Mammary epithelial cell (primary cell): ENCODE measurements at regions of chr7 and their contacts with region 1.

Region 1: GRCh38 chr7:158760936-158761335 is 56.3 kb upstream of the NCAPG2 start:
- DNase-seq: no peak
- H3K4me3 ChIP-seq: no peak overlapping the region
- H3K27ac ChIP-seq: no peak overlapping the region
- H3K4me1 ChIP-seq: no peaks in the 10 kb centered on the region
- H3K27me3 ChIP-seq: no peaks in the 10 kb centered on the region
- CTCF ChIP-seq: peak; percentile 11 to 17

Region 2: GRCh38 chr7:158723266-158723665 is 37.7 kb before region 1 on chr7:
- CTCF ChIA-PET with region 1: no interaction called
- dilution Hi-C with region 1: loop called (anchors 5 kb)
- in situ Hi-C with region 1: no loop called
- intact Hi-C with region 1: no loop called
- DNase-seq: no peak
- H3K4me3 ChIP-seq: no peak overlapping the region
- H3K27ac ChIP-seq: no peak overlapping the region
- H3K4me1 ChIP-seq: peaks cover 3% of the 10 kb centered on the region
- H3K27me3 ChIP-seq: no peaks in the 10 kb centered on the region
- CTCF ChIP-seq: no peak

Region 3: DNA sequence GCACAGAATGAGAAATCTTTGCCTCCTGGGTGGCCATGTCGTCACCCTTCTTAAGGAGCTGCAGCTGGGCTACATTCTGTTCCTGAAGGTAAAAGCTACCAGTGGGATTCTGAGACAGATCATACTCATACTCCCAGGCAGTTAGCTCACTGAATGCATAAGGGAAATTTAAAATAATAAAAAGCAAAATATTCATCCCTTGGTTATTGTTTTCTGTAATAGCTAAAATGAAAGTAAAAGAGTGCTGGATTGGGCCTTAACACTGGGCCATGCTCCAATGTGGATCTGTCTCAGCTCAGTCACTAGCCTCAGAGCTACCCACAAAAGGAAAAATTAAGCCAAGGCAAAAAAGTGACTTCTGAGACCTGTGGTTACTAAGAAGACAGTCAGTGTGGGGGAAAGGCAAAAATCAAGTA is 86.5 kb after region 1 on chr7:
- CTCF ChIA-PET with region 1: no interaction called
- dilution Hi-C with region 1: no loop called
- in situ Hi-C with region 1: no loop called
- intact Hi-C with region 1: no loop called
- DNase-seq: no peak
- H3K4me3 ChIP-seq: no peak overlapping the region
- H3K27ac ChIP-seq: no peak overlapping the region
- H3K4me1 ChIP-seq: no peaks in the 10 kb centered on the region
- H3K27me3 ChIP-seq: no peaks in the 10 kb centered on the region
- CTCF ChIP-seq: no peak